Breast epithelium (tissue), 4 donors: ENCODE measurements at regions of chr10 and their contacts with region 1.

Region 1: GRCh38 chr10:120917521-120918250 is 66.5 kb downstream of the WDR11 start:
- DNase-seq: no peak
- H3K4me3 ChIP-seq: no peak overlapping the region
- H3K27ac ChIP-seq: no peak overlapping the region
- H3K4me1 ChIP-seq: no peaks in the 10 kb centered on the region
- H3K27me3 ChIP-seq: no peaks in the 10 kb centered on the region
- CTCF ChIP-seq: no peak
- POLR2A ChIP-seq: no peak

Region 2: DNA sequence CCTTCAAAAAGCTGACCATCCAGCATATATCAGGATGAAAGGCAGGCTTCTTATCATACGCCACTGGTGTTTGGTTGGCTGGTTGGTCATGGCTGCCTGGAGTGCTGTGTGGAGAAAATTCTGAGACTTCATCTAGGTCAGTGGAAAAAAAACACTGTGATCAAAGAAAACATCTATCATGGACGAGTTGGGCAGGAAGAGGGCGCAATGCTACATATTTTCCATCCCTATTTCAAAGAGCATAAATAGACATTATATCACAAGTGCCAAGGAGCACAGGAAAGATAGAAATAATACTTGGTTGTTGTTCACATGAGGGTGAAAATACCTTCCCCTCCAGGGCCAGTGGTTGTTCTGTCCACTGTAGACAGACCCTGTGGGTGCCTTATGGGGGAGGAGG is 589.0 kb before region 1 on chr10:
- intact Hi-C with region 1: no loop called
- DNase-seq: no peak
- H3K4me3 ChIP-seq: no peak overlapping the region
- H3K27ac ChIP-seq: no peak overlapping the region
- H3K4me1 ChIP-seq: no peaks in the 10 kb centered on the region
- H3K27me3 ChIP-seq: peaks cover 0 to 4% of the 10 kb centered on the region in 2 donors
- CTCF ChIP-seq: no peak
- POLR2A ChIP-seq: no peak

Region 3: GRCh38 chr10:120962756-120963593 is 45.3 kb after region 1 on chr10:
- intact Hi-C with region 1: no loop called
- DNase-seq: no peak
- H3K4me3 ChIP-seq: no peak overlapping the region
- H3K27ac ChIP-seq: no peak overlapping the region
- H3K4me1 ChIP-seq: no peaks in the 10 kb centered on the region
- H3K27me3 ChIP-seq: no peaks in the 10 kb centered on the region
- CTCF ChIP-seq: no peak
- POLR2A ChIP-seq: no peak

Region 4: DNA sequence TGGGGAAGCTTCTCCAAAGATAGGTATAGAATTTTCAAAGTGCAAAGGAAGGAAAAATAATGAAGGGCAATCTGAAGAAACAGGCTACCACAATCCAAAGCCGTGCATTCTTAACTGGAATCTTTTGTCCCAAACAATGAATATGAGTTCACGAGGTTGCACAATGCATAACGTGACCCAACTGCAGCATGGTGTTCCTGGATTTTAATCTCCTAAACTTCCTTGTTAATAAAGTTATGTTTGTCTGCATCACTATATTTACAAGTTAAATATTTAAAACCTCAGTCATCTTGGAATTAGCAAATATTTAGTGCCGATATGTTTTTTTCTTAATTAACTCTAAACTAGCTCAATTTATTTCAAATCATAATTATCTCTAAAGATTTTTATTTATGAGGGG is 137.2 kb after region 1 on chr10:
- intact Hi-C with region 1: loop called (anchors 5 kb)
- DNase-seq: no peak
- H3K4me3 ChIP-seq: no peak overlapping the region
- H3K27ac ChIP-seq: no peak overlapping the region
- H3K4me1 ChIP-seq: no peaks in the 10 kb centered on the region
- H3K27me3 ChIP-seq: no peaks in the 10 kb centered on the region
- CTCF ChIP-seq: no peak
- POLR2A ChIP-seq: no peak

Region 5: DNA sequence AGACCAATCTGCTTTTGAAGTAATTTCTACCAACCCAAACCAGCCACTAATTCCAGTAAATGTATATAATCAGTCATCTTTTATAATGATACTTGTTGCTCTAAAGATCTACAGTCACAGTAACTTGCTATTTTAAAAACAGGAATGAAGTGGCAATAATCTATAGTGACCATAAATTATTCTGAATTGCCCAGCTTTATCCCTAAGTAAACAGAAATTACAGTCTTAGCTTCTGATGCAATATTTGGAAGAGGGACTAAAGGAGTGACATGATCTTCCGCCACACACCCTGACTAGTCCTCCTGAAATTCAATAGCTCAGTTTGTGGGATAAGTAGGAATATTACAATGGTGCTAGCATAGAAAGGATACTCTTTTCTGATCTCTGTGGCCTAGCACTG is 914.1 kb after region 1 on chr10:
- intact Hi-C with region 1: loop called (anchors 5 kb)
- DNase-seq: no peak
- H3K4me3 ChIP-seq: no peak overlapping the region
- H3K27ac ChIP-seq: no peak overlapping the region
- H3K4me1 ChIP-seq: no peaks in the 10 kb centered on the region
- H3K27me3 ChIP-seq: no peaks in the 10 kb centered on the region
- CTCF ChIP-seq: no peak
- POLR2A ChIP-seq: no peak